Caco-2 (cell line): ENCODE measurements at regions of chr4 and their contacts with region 1.

Region 1: DNA sequence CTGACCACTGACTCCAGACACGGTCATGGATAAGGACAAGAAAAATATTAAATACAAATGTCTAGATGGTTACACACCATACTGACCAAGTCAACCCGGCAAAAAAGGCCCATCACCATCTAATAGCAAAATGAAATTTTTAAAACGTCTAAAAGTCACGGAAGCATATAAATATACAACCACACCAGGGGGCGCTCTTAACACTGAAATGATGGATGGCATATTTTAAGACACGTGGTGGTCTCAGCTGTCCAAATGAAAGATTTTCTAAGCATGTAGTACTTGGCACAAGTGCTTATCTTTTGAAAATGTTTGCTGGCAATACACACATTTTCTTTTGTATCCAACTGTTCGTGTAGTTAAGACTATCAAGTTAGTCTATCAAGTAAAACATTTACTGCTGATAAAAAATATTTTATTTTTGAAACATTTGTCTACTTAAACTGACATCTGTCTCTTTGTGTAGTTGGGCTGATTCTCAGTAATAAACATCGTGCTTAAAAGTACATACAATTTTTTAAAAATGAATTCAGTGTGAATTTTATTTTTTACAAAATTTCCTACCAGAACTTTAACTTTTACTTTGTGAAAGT is 64.6 kb downstream of the COX7B2 start:
- DNase-seq: peak; percentile 66 to 76
- H3K4me3 ChIP-seq: no peak overlapping the region
- H3K4me3 Mint-ChIP-seq: no peak overlapping the region
- H3K27ac Mint-ChIP-seq: no peak overlapping the region
- H3K4me1 ChIP-seq: peaks cover 24% of the 10 kb centered on the region
- H3K4me1 Mint-ChIP-seq: peaks cover 16% of the 10 kb centered on the region
- H3K27me3 ChIP-seq: no peaks in the 10 kb centered on the region
- H3K27me3 Mint-ChIP-seq: no peaks in the 10 kb centered on the region
- CTCF ChIP-seq: peak; percentile 52 to 74

Region 2: DNA sequence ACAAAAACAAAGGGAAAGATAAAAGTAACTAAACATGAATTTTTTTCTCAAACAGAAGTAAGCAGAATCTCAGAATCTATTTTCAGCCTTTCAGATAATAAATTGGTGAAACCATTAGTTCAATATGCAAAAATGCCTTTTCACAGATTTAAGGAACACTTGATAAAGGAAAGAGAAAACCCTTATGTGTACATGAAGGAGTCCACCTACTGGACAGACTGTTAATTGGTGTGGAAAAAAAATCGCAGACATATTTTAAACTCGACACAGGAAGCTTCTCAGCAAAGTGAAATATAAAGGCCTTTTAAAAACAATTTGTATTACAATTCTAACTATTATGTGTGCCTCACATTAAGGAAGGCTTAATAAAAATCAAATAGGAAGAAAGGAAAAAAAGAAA is 42.3 kb after region 1 on chr4:
- CTCF ChIA-PET with region 1: interaction called, 3 read pairs
- POLR2A ChIA-PET with region 1: no interaction called
- intact Hi-C with region 1: loop called (anchors 1 kb)
- DNase-seq: peak in 1 of 2 experiments; percentile 32
- H3K4me3 ChIP-seq: no peak overlapping the region
- H3K4me3 Mint-ChIP-seq: no peak overlapping the region
- H3K27ac Mint-ChIP-seq: peak overlapping the region; percentile 72
- H3K4me1 ChIP-seq: peaks cover 49% of the 10 kb centered on the region
- H3K4me1 Mint-ChIP-seq: peaks cover 29% of the 10 kb centered on the region
- H3K27me3 ChIP-seq: no peaks in the 10 kb centered on the region
- H3K27me3 Mint-ChIP-seq: no peaks in the 10 kb centered on the region
- CTCF ChIP-seq: peak; percentile 29 to 32

Region 3: GRCh38 chr4:46922205-46922604 is 77.8 kb after region 1 on chr4:
- CTCF ChIA-PET with region 1: no interaction called
- POLR2A ChIA-PET with region 1: no interaction called
- intact Hi-C with region 1: no loop called
- DNase-seq: no peak
- H3K4me3 ChIP-seq: no peak overlapping the region
- H3K4me3 Mint-ChIP-seq: no peak overlapping the region
- H3K27ac Mint-ChIP-seq: no peak overlapping the region
- H3K4me1 ChIP-seq: peaks cover 20% of the 10 kb centered on the region
- H3K4me1 Mint-ChIP-seq: peaks cover 14% of the 10 kb centered on the region
- H3K27me3 ChIP-seq: no peaks in the 10 kb centered on the region
- H3K27me3 Mint-ChIP-seq: no peaks in the 10 kb centered on the region
- CTCF ChIP-seq: no peak

Region 4: GRCh38 chr4:47002593-47002992 is 158.2 kb after region 1 on chr4:
- CTCF ChIA-PET with region 1: no interaction called
- POLR2A ChIA-PET with region 1: no interaction called
- intact Hi-C with region 1: loop called (anchors 1 kb)
- DNase-seq: peak in 1 of 2 experiments; percentile 7
- H3K4me3 ChIP-seq: no peak overlapping the region
- H3K4me3 Mint-ChIP-seq: no peak overlapping the region
- H3K27ac Mint-ChIP-seq: no peak overlapping the region
- H3K4me1 ChIP-seq: peaks cover 4% of the 10 kb centered on the region; the same call in 1 of the 2 replicates
- H3K4me1 Mint-ChIP-seq: peaks cover 4% of the 10 kb centered on the region
- H3K27me3 ChIP-seq: no peaks in the 10 kb centered on the region
- H3K27me3 Mint-ChIP-seq: no peaks in the 10 kb centered on the region
- CTCF ChIP-seq: peak; percentile 42 to 53

Region 5: GRCh38 chr4:47122592-47123291 is 278.3 kb after region 1 on chr4:
- CTCF ChIA-PET with region 1: no interaction called
- POLR2A ChIA-PET with region 1: no interaction called
- intact Hi-C with region 1: loop called (anchors 1 kb)
- DNase-seq: peak; percentile 69 to 80
- H3K4me3 ChIP-seq: no peak overlapping the region
- H3K4me3 Mint-ChIP-seq: no peak overlapping the region
- H3K27ac Mint-ChIP-seq: no peak overlapping the region
- H3K4me1 ChIP-seq: no peaks in the 10 kb centered on the region
- H3K4me1 Mint-ChIP-seq: no peaks in the 10 kb centered on the region
- H3K27me3 ChIP-seq: no peaks in the 10 kb centered on the region
- H3K27me3 Mint-ChIP-seq: no peaks in the 10 kb centered on the region
- CTCF ChIP-seq: peak; percentile 70 to 82

Region 6: GRCh38 chr4:47383829-47384427 is 539.5 kb after region 1 on chr4:
- CTCF ChIA-PET with region 1: no interaction called
- POLR2A ChIA-PET with region 1: no interaction called
- intact Hi-C with region 1: loop called (anchors 2 kb)
- DNase-seq: peak in 1 of 2 experiments; percentile 5
- H3K4me3 ChIP-seq: no peak overlapping the region
- H3K4me3 Mint-ChIP-seq: no peak overlapping the region
- H3K27ac Mint-ChIP-seq: no peak overlapping the region
- H3K4me1 ChIP-seq: no peaks in the 10 kb centered on the region
- H3K4me1 Mint-ChIP-seq: no peaks in the 10 kb centered on the region
- H3K27me3 ChIP-seq: no peaks in the 10 kb centered on the region; the same call in 1 of the 2 replicates
- H3K27me3 Mint-ChIP-seq: no peaks in the 10 kb centered on the region
- CTCF ChIP-seq: peak; percentile 19 to 52